Ovary (tissue), 10 donors: ENCODE measurements at regions of chr1 and their contacts with region 1.

Region 1: DNA sequence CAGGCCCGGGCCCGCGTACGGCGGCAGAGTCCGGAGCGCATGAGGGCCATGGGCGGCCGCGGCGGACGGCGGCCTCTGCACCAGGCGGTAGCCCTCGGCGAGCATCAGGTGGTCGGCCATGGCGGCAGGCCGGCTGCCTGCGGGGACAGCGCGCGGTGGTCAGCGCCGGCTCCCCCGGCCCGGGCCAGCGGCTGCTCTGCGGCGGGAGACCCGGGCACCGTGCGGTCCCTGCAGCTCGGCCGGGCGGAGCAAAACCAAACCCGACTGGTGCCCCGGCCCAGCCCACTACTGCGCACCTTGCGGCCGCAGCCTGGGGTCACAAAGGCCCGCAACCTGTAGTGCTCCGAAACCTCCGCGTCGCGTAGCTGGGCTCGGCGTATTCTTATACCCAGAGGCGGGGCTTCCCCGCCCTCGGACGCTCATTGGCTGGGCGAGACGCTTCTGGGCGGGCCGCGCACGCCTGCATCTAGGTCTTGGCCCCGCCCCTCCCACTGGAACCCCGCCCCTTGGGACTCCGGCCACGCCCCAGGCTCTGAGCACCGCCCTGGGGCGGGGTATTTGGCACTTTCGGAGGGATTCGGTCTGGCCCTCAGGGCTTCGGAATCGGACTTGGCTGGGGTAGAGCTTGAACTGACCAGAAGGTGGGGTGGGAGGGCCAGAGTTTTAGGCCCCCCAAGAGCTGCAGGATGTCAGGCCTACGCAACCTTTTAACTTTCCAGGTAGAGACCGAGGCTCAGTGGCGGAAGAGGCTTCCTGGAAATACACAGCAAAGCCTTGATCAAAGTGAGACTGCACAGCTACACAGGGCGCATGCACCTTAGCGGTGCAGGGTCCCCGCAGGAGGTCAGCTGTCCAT is at the start of gene CITED4:
- DNase-seq: peak; percentile 95 to 99 (median 97)
- H3K4me3 ChIP-seq: peak within 1 kb of the TSS; percentile 71
- H3K27ac ChIP-seq: peak within 1 kb of the TSS; percentile 79 to 94
- H3K4me1 ChIP-seq: peaks cover 7% of the 10 kb centered on the region
- H3K27me3 ChIP-seq: no peaks in the 10 kb centered on the region
- CTCF ChIP-seq: peak in 2 of 3 donors; percentile 5 to 10
- EP300 ChIP-seq: no peak
- POLR2A ChIP-seq: peak; percentile 86
- total RNA-seq, gene CITED4: 16.4 to 149 (median 24.3) TPM

Region 2: DNA sequence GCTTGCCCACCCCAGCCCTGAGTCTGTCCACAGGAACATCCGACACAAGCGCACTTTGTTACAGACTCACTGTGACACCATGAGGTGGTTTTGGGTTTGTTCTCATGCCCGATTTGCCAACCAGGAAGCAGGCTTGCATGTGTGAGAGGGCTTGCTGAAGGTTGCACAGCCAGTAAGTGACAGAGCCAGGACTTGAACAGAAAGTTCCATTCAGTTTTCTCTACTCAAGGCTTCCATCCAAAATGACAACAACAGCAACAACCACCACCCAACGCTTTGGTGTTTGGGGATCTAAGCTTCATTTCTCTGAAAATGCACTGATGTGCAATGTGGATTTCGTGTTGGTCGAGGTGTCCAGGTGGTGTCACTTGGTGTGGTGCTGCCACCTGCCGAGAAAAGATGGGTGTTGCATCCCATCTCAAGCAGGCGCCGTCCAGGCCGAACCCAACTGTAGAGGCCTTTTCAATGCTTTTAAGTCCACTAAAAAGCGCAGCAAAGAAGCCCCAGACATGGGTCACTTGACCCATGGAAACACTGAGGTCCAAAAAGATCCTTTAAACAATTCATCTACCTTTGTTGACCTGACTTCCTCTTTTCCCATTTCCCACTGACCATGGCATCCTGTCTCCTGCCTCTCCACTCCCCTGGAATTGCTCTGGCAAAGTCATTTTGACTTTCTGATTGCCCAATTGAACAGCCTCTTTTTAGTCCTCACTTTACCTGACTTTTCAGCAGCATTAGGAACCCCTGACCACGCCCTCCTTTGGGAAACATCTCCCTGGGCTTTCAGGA is 12.2 kb before region 1 on chr1:
- intact Hi-C with region 1: no loop called
- DNase-seq: peak; percentile 64 to 80 (median 75)
- H3K4me3 ChIP-seq: no peak overlapping the region
- H3K27ac ChIP-seq: no peak overlapping the region
- H3K4me1 ChIP-seq: no peaks in the 10 kb centered on the region
- H3K27me3 ChIP-seq: no peaks in the 10 kb centered on the region
- CTCF ChIP-seq: peak; percentile 81 to 83 (median 83)
- EP300 ChIP-seq: no peak
- POLR2A ChIP-seq: no peak

Region 3: DNA sequence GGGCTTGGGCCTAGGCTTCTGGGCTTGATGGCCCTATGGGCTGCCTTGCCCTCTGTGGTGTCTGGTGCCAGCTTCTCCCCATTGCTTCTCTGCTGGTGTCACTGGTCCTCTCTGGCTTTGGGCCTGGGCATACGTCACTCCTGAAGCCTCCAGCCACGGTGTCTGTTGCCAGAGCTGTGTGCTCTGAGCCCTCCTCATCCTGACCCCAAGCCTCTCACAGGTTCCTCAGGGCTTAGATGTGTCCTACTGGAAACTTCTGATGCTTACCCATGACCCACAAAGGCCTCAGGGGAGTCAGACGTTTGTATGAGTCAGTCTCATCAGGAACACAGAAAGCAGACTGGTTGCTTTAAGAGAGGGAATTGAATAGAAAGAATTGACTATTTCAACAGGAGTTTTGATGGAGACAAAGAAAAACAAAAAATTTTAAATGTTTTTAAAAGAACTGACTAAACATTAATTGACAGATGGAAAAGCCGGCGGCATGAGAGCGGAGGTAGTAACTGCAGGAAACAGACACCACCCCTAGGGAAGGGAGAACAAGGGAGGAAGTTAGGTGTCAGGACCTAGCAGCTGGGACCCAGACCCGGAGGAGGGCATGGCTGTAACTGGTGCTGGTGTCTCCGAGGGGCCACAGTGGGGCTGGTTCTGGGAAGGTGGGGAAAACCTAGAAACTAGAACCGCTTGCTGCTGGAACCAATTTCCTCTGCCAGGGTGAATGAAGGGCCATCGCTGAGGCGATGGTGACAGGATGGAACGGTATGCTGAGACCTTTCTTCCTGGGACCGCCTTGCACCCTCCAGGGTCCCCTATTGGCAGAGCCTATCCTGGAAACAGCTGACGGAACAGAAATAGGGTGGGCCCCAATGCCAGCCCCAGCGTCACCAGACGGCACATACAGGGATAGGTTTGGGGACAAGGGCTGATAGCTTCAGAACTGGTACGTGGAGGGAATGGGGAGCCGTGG is 39.9 kb after region 1 on chr1:
- intact Hi-C with region 1: no loop called
- DNase-seq: no peak
- H3K4me3 ChIP-seq: no peak overlapping the region
- H3K27ac ChIP-seq: no peak overlapping the region
- H3K4me1 ChIP-seq: no peaks in the 10 kb centered on the region
- H3K27me3 ChIP-seq: no peaks in the 10 kb centered on the region
- CTCF ChIP-seq: no peak
- EP300 ChIP-seq: no peak
- POLR2A ChIP-seq: no peak

Region 4: DNA sequence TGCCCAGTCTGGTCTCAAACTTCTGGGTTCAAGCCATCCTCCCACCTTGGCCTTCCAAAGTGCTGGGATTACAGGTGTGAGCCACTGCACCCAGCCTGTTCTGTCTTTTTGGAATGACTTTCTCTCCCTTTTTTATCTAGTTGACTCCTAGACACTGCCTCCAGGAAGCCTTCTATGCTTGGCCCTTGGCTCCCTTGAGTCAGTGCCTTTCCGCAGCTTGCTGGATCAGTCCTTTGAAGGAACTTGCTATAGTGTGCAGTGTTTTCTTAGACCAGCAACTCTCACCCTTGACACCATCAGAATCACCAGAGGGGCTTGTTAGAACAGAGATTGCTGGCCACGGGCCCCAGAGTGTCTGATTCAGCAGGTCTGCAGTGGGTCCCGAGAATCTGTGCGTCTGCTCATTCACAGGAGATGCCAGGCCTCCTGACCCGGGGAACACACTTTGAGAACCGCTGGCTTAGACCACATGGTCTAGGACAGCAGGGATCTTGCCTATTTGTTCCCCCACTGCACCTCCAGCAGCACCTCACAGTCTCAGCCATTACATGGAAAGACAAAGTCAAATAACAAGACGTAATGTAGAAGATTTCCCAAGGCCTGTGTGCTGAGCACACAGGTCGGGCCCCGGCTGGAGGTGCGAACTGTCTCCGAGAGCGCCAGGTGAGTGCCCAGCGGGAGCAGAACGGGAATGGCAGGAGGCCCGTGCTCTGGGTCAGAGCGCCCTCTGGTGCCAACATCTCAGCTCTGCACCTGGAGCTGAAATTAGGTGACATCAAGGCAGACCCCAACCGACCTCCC is 89.9 kb after region 1 on chr1:
- intact Hi-C with region 1: loop called in 2 of 4 experiments (anchors 5 to 10 kb)
- DNase-seq: peak; percentile 63 to 82 (median 68)
- H3K4me3 ChIP-seq: no peak overlapping the region
- H3K27ac ChIP-seq: no peak overlapping the region
- H3K4me1 ChIP-seq: no peaks in the 10 kb centered on the region
- H3K27me3 ChIP-seq: no peaks in the 10 kb centered on the region
- CTCF ChIP-seq: peak; percentile 73 to 79 (median 77)
- EP300 ChIP-seq: no peak
- POLR2A ChIP-seq: no peak

Region 5: GRCh38 chr1:41109316-41110197 is 247.3 kb after region 1 on chr1:
- intact Hi-C with region 1: no loop called
- DNase-seq: peak; percentile 45 to 74 (median 54)
- H3K4me3 ChIP-seq: no peak overlapping the region
- H3K27ac ChIP-seq: peak overlapping the region; percentile 89 to 90
- H3K4me1 ChIP-seq: peaks cover 6% of the 10 kb centered on the region
- H3K27me3 ChIP-seq: no peaks in the 10 kb centered on the region
- CTCF ChIP-seq: no peak
- EP300 ChIP-seq: peak; percentile 72
- POLR2A ChIP-seq: no peak